Activated T-helper 1 cell treated with anti-CD3 and anti-CD28 coated beads, Interleukin-12 subunit alpha, Interleukin-12 subunit beta, Interleukin-2, Interleukin-4 antibody, amounts not matched to agents 30 ng/mL and 10 ng/mL and 1 ng/mL, durations not matched to agents 14 hours and 24 hours and 36 hours (primary cell): ENCODE measurements at regions of chr2 and their contacts with region 1.

Region 1: DNA sequence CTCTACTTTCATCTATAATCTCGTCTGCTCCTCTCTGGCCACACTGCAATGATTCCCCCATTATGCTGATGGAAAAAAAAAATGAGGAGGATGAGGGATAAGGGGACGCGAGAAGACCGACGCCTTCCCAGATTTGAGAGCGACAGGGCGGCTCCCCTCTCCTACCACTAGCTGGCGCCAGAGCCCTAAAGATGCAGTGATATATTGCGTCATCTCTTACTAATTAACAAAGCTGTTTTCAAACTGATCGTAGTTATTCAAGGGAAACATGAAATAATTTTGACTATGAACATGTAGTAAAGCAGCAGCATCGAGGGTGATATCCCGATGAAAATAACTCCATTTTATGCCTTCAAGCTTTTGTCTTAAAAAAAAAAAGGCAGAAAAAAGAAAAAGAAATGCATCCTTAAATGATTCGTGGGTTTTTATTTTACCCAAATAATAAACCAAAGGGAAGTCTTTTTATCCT is 48.0 kb upstream of the HNRNPA3 start:
- DNase-seq: peak; percentile 63
- H3K4me3 Mint-ChIP-seq: no peak overlapping the region
- H3K27ac Mint-ChIP-seq: no peak overlapping the region
- H3K4me1 Mint-ChIP-seq: peaks cover 25% of the 10 kb centered on the region
- H3K27me3 Mint-ChIP-seq: peaks cover 3% of the 10 kb centered on the region

Region 2: DNA sequence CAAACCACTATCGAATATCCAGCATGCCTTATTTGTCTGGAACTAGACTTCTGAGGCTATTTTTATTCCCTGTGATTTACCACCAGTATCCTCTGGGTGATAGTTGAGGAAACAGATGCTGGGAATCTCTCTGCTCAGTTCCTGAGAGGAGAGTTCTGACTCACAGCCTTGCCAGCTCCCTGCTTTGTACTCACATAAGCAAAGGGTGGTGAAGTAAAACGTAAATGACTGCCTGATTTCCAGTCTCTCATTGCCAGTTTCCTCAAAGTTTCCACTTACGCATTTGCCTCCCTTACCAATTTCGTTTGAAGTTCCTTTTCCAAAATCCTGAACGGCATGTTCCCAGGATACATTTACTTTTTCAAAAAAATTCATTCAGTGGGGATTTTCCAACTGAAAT is 21.2 kb before region 1 on chr2:
- intact Hi-C with region 1: no loop called
- DNase-seq: no peak
- H3K4me3 Mint-ChIP-seq: no peak overlapping the region
- H3K27ac Mint-ChIP-seq: no peak overlapping the region
- H3K4me1 Mint-ChIP-seq: peaks cover 7% of the 10 kb centered on the region
- H3K27me3 Mint-ChIP-seq: peaks cover 39% of the 10 kb centered on the region

Region 3: GRCh38 chr2:177212106-177212890 is 47.7 kb after region 1 on chr2 and contains the start of gene HNRNPA3:
- intact Hi-C with region 1: loop called (anchors 1 kb)
- DNase-seq: peak; percentile 100
- H3K4me3 Mint-ChIP-seq: peak within 1 kb of the TSS; percentile 97
- H3K27ac Mint-ChIP-seq: peak within 1 kb of the TSS; percentile 99
- H3K4me1 Mint-ChIP-seq: peaks cover 58% of the 10 kb centered on the region
- H3K27me3 Mint-ChIP-seq: no peaks in the 10 kb centered on the region
- total RNA-seq, gene HNRNPA3: 326 and 333 TPM in 2 replicates

Region 4: DNA sequence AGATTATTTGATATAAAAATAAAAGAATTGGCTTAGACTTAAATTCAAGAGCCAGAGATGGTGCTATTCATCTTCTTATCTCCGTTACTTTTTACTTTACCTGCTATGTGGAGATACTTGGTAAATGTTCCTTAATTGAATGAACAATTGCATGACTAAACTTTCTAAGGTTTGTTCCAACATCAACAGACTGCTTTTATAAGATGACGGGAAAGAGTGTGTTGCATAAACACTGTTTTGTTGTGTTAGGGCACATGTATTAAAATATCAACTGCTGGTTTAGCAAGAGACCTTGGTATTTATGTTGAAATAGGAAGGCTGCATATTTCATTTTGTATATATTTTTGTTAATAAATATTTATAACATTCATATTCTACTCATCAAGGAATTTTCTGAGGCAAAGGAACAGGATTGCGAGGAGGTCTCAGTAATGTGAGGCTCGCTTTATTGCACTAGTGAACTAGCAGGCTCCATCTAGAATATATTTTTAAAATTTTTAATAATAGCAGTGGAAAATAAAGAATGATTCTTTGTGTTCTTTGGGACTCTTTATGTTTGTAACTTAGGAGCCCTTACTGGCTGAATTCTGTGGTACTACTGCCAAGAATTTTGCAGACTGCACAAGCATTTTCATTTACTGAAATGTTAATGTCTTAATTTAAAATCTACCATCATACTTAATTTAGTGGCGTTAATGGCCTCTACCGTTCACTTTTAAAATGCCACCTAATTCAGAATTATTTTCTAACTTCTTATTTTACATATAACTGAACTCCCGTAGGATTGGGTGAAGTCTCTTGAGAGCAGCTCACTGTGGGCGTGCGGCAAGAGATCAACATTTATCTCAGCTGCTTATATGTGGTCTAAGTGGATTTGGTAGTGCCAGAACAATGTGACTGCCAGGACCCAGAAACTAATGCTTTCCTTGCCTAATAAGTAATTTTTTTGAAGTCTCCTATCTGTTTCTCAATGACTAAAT is 110.7 kb after region 1 on chr2:
- intact Hi-C with region 1: no loop called
- DNase-seq: no peak
- H3K4me3 Mint-ChIP-seq: no peak overlapping the region
- H3K27ac Mint-ChIP-seq: no peak overlapping the region
- H3K4me1 Mint-ChIP-seq: peaks cover 24% of the 10 kb centered on the region
- H3K27me3 Mint-ChIP-seq: no peaks in the 10 kb centered on the region

Region 5: GRCh38 chr2:177332041-177332991 is 167.7 kb after region 1 on chr2:
- intact Hi-C with region 1: loop called (anchors 1 kb)
- DNase-seq: peak; percentile 45
- H3K4me3 Mint-ChIP-seq: no peak overlapping the region
- H3K27ac Mint-ChIP-seq: no peak overlapping the region
- H3K4me1 Mint-ChIP-seq: peaks cover 16% of the 10 kb centered on the region
- H3K27me3 Mint-ChIP-seq: no peaks in the 10 kb centered on the region

Region 6: DNA sequence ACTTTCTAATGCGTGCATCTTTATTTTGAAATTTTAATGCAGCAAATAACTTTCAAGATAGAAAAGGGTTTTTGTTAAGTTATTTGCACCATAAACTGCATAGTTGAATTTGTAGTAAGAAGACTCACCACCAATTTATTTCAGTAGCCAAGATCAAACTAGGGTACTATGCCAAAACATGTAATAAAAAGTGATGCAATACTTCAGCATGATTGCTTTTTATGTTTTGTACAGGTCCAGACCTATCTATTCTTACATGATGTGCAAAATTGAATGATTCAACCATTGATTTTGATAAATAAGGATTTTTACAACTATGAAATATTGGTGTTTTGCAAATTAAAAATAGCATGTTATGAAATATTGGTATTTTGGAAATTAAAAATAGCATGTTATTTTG is 254.7 kb after region 1 on chr2:
- intact Hi-C with region 1: loop called (anchors 1 kb)
- DNase-seq: no peak
- H3K4me3 Mint-ChIP-seq: no peak overlapping the region
- H3K27ac Mint-ChIP-seq: no peak overlapping the region
- H3K4me1 Mint-ChIP-seq: peaks cover 20% of the 10 kb centered on the region
- H3K27me3 Mint-ChIP-seq: no peaks in the 10 kb centered on the region

Region 7: GRCh38 chr2:177618255-177619253 is 453.9 kb after region 1 on chr2:
- intact Hi-C with region 1: loop called (anchors 5 kb)
- DNase-seq: peak; percentile 91
- H3K4me3 Mint-ChIP-seq: peak overlapping the region; percentile 94
- H3K27ac Mint-ChIP-seq: peak overlapping the region; percentile 99
- H3K4me1 Mint-ChIP-seq: peaks cover 13% of the 10 kb centered on the region
- H3K27me3 Mint-ChIP-seq: peaks cover 4% of the 10 kb centered on the region

Region 8: GRCh38 chr2:177763532-177764265 is 599.1 kb after region 1 on chr2:
- intact Hi-C with region 1: loop called (anchors 1 kb)
- DNase-seq: peak; percentile 61
- H3K4me3 Mint-ChIP-seq: no peak overlapping the region
- H3K27ac Mint-ChIP-seq: no peak overlapping the region
- H3K4me1 Mint-ChIP-seq: no peaks in the 10 kb centered on the region
- H3K27me3 Mint-ChIP-seq: peaks cover 15% of the 10 kb centered on the region